ENCODE measurements at regions of chr6 and their contacts with region 1.

Region 1: GRCh38 chr6:155154158-155154830 is 109.5 kb upstream of the CLDN20 start:
- DNase-seq: peak; percentile 86
- H3K4me3 Mint-ChIP-seq: peak overlapping the region; percentile 53
- H3K27ac Mint-ChIP-seq: peak overlapping the region; percentile 88
- H3K4me1 Mint-ChIP-seq: peaks cover 73% of the 10 kb centered on the region
- H3K27me3 Mint-ChIP-seq: no peaks in the 10 kb centered on the region

Region 2: DNA sequence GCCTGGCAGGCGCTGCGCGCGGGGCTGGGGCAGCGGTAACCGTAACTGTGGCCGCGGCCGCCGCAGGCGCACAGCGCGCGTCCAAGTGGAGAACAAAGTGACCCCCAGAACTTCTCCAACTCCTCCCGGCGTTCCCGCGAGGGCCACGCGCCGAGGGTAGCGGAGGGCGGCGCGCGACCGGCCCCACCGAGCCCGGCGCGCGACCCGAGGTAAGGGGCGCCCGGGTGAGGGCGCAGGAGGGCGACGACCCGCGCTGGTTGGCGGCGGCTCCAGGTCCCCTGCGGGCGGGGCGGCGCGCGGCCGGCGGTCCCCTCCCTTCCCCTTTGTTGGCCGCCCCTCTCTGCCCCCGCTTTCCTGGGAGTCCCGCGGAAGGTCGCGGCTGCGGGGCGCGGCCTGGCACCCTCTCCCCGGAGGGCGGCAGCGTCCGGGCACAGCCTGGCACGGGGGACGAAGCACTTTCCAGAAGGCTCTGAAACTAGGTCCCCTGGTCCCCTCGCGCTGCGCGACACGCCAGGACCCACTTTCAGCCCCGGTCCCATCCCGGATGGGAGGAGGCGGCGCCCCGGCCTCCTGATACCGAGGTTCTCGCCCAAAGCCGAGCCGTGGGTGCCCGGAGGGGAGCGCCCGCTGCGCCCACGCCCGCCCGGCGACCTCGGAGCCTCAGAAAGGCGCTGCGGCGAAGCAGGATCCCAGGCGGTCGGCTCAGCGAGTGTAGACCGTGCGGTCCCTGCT is 158.8 kb before region 1 on chr6 and contains the start of gene TIAM2:
- intact Hi-C with region 1: loop called (anchors 5 kb)
- DNase-seq: peak; percentile 76
- H3K4me3 Mint-ChIP-seq: peak within 1 kb of the TSS; percentile 68
- H3K27ac Mint-ChIP-seq: peak within 1 kb of the TSS; percentile 64
- H3K4me1 Mint-ChIP-seq: peaks cover 15% of the 10 kb centered on the region
- H3K27me3 Mint-ChIP-seq: peaks cover 24% of the 10 kb centered on the region
- total RNA-seq, gene TIAM2: 86.9 and 91.9 TPM in 2 replicates

Region 3: GRCh38 chr6:155079985-155080452 is 74.3 kb before region 1 on chr6:
- intact Hi-C with region 1: loop called (anchors 2 kb)
- DNase-seq: no peak
- H3K4me3 Mint-ChIP-seq: peak overlapping the region; percentile 22
- H3K27ac Mint-ChIP-seq: peak overlapping the region; percentile 85
- H3K4me1 Mint-ChIP-seq: peaks cover 31% of the 10 kb centered on the region
- H3K27me3 Mint-ChIP-seq: no peaks in the 10 kb centered on the region

Measured in activated CD4-positive, alpha-beta T cell treated with anti-CD3 and anti-CD28 coated beads, Interleukin-2, amount 10 ng/mL, durations not matched to agents 24 days and 14 days (primary cell).